B cell (primary cell): ENCODE measurements at regions of chr10 and their contacts with region 1.

Region 1: GRCh38 chr10:71748671-71749191 is 24.6 kb downstream of the VSIR start:
- DNase-seq: peak; percentile 84
- ATAC-seq: peak; percentile 80
- H3K4me3 ChIP-seq: peak overlapping the region in 1 of 5 experiments; percentile 15
- H3K4me3 Mint-ChIP-seq: peak overlapping the region; percentile 84
- H3K27ac ChIP-seq: peak overlapping the region; percentile 72 to 84
- H3K27ac Mint-ChIP-seq: peak overlapping the region; percentile 100
- H3K4me1 ChIP-seq: peaks cover 83 to 92% of the 10 kb centered on the region in 2 donors
- H3K4me1 Mint-ChIP-seq: peaks cover 89% of the 10 kb centered on the region
- H3K27me3 ChIP-seq: no peaks in the 10 kb centered on the region
- H3K27me3 Mint-ChIP-seq: no peaks in the 10 kb centered on the region
- CTCF ChIP-seq: no peak

Region 2: DNA sequence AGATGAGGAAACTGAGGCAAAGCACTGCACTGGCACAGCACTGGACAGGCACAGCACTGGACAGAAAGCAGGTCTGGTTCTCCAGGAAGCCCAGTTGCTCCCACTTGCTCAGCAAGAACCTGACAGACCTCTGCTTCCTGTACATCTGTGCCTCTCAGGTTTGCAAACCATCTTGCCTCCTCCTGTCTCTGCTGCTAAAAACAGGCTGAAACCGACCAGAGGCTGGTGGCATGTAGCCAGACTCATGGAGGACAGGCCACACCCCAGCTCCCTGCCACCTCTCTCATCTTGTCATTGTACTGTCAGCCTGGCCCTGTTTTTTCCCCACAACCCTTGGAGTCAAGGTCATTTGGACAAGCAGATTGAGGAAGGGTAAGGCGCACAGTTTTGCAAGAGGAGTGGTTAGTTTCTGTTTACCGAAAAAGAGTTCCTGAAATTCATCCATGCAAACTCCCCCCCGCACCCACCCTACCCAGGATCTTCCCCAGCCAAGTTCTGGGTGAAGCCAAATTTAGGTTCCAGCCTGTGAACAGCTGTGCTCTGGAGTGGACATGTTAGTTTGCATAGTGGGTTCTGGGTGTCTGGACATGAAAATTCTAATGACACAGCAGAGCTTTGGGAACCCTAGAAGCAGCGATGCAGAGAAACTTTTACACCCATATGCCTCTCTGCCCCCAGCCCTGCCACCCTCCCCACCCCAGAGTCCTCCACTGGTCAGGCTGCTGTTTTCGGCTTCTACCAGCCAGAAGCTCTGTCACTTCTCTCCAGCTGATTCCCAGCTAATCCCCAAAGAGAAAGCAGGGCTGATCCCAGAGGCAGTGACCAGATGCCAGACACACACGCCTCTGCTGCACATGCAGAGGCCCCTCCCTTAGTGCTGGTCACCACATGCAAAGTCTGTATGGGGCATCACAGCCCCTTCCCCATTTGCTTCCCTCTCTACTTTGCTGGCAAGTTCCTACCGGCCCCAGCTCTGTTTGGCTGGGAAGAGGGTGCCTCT is 20.7 kb before region 1 on chr10:
- CTCF ChIA-PET with region 1: interaction called, 6 read pairs
- POLR2A ChIA-PET with region 1: interaction called, 6 read pairs
- intact Hi-C with region 1: loop called (anchors 1 kb)
- DNase-seq: peak; percentile 74
- ATAC-seq: peak; percentile 67
- H3K4me3 ChIP-seq: peak overlapping the region in 4 of 5 experiments; percentile 2 to 36 (median 18)
- H3K4me3 Mint-ChIP-seq: peak overlapping the region; percentile 83
- H3K27ac ChIP-seq: peak overlapping the region; percentile 75 to 78
- H3K27ac Mint-ChIP-seq: peak overlapping the region; percentile 92
- H3K4me1 ChIP-seq: peaks cover 40 to 69% of the 10 kb centered on the region in 2 donors
- H3K4me1 Mint-ChIP-seq: peaks cover 55% of the 10 kb centered on the region
- H3K27me3 ChIP-seq: no peaks in the 10 kb centered on the region
- H3K27me3 Mint-ChIP-seq: no peaks in the 10 kb centered on the region
- CTCF ChIP-seq: no peak